CD8-positive, alpha-beta T cell (primary cell): ENCODE measurements at regions of chr19 and their contacts with region 1.

Region 1: GRCh38 chr19:16382775-16383543 is 58.3 kb downstream of the KLF2 start:
- DNase-seq: peak; percentile 70 to 91 (median 84)
- ATAC-seq: peak; percentile 80
- H3K4me3 ChIP-seq: peak overlapping the region; percentile 40 to 42
- H3K4me3 Mint-ChIP-seq: peak overlapping the region; percentile 54
- H3K27ac ChIP-seq: peak overlapping the region; percentile 66 to 82
- H3K27ac Mint-ChIP-seq: peak overlapping the region; percentile 95
- H3K4me1 ChIP-seq: peaks cover 58% of the 10 kb centered on the region
- H3K4me1 Mint-ChIP-seq: peaks cover 58% of the 10 kb centered on the region
- H3K27me3 ChIP-seq: no peaks in the 10 kb centered on the region
- H3K27me3 Mint-ChIP-seq: no peaks in the 10 kb centered on the region
- CTCF ChIP-seq: peak; percentile 85

Region 2: GRCh38 chr19:16216744-16217670 is 166.0 kb before region 1 on chr19:
- CTCF ChIA-PET with region 1: interaction called, 10 read pairs
- POLR2A ChIA-PET with region 1: interaction called, 3 read pairs
- intact Hi-C with region 1: no loop called
- DNase-seq: peak in 8 of 9 experiments; percentile 28 to 83 (median 59)
- ATAC-seq: peak; percentile 86
- H3K4me3 ChIP-seq: peak overlapping the region in 1 of 2 experiments; percentile 29
- H3K4me3 Mint-ChIP-seq: peak overlapping the region; percentile 80
- H3K27ac ChIP-seq: peak overlapping the region; percentile 44
- H3K27ac Mint-ChIP-seq: peak overlapping the region; percentile 95
- H3K4me1 ChIP-seq: peaks cover 66% of the 10 kb centered on the region
- H3K4me1 Mint-ChIP-seq: peaks cover 65% of the 10 kb centered on the region
- H3K27me3 ChIP-seq: no peaks in the 10 kb centered on the region
- H3K27me3 Mint-ChIP-seq: no peaks in the 10 kb centered on the region
- CTCF ChIP-seq: no peak

Region 3: DNA sequence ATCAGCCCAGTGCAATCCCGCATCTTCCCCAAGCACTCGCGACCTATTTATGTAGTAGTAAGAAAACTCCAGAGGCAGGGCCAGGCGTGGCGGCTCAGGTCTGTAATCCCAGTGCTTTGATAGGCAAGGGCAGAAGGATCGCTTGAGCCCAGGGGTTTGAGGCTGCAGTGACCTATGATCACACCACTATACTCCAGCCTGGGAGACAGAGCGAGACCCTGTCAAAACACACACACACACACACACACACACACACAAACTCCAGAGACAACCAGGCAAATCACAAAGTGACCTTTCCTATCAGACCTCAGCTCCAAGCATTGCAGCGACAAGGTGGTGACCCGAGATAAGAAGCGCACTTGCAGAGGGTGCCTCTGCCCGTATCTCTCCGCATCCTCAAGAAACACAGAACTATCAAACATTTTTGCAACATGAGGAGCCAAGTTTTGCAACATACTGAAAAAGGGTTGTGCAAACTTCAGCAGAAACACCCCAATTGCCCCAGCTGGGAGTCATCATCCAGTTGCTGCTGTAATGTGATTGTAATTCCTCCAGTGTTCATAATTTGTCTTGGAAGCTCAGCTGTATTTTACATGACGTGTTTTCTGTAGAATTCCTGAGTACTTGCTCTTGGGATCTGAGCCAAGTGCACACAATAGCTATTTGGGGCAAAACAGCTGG is 67.0 kb before region 1 on chr19:
- CTCF ChIA-PET with region 1: interaction called, 13 read pairs
- POLR2A ChIA-PET with region 1: no interaction called
- intact Hi-C with region 1: no loop called
- DNase-seq: no peak
- ATAC-seq: no peak
- H3K4me3 ChIP-seq: no peak overlapping the region
- H3K4me3 Mint-ChIP-seq: no peak overlapping the region
- H3K27ac ChIP-seq: no peak overlapping the region
- H3K27ac Mint-ChIP-seq: no peak overlapping the region
- H3K4me1 ChIP-seq: peaks cover 11% of the 10 kb centered on the region
- H3K4me1 Mint-ChIP-seq: peaks cover 14% of the 10 kb centered on the region
- H3K27me3 ChIP-seq: no peaks in the 10 kb centered on the region
- H3K27me3 Mint-ChIP-seq: no peaks in the 10 kb centered on the region
- CTCF ChIP-seq: no peak

Region 4: GRCh38 chr19:16338470-16339360 is 44.2 kb before region 1 on chr19:
- CTCF ChIA-PET with region 1: interaction called, 200 read pairs
- POLR2A ChIA-PET with region 1: interaction called, 2,627 read pairs
- intact Hi-C with region 1: no loop called
- DNase-seq: peak in 6 of 9 experiments; percentile 55 to 83 (median 62)
- ATAC-seq: peak; percentile 49
- H3K4me3 ChIP-seq: peak overlapping the region; percentile 25 to 38
- H3K4me3 Mint-ChIP-seq: peak overlapping the region; percentile 81
- H3K27ac ChIP-seq: peak overlapping the region; percentile 28 to 76
- H3K27ac Mint-ChIP-seq: peak overlapping the region; percentile 94
- H3K4me1 ChIP-seq: peaks cover 71% of the 10 kb centered on the region
- H3K4me1 Mint-ChIP-seq: peaks cover 61% of the 10 kb centered on the region
- H3K27me3 ChIP-seq: no peaks in the 10 kb centered on the region
- H3K27me3 Mint-ChIP-seq: no peaks in the 10 kb centered on the region
- CTCF ChIP-seq: no peak

Region 5: GRCh38 chr19:16371540-16371986 is 11.4 kb before region 1 on chr19:
- CTCF ChIA-PET with region 1: interaction called, 131 read pairs
- POLR2A ChIA-PET with region 1: interaction called, 206 read pairs
- intact Hi-C with region 1: loop called (anchors 1 kb)
- DNase-seq: peak; percentile 87 to 97 (median 92)
- ATAC-seq: peak; percentile 41
- H3K4me3 ChIP-seq: peak overlapping the region; percentile 33 to 44
- H3K4me3 Mint-ChIP-seq: no peak overlapping the region
- H3K27ac ChIP-seq: peak overlapping the region; percentile 91 to 95
- H3K27ac Mint-ChIP-seq: no peak overlapping the region
- H3K4me1 ChIP-seq: peaks cover 95% of the 10 kb centered on the region
- H3K4me1 Mint-ChIP-seq: peaks cover 68% of the 10 kb centered on the region
- H3K27me3 ChIP-seq: no peaks in the 10 kb centered on the region
- H3K27me3 Mint-ChIP-seq: no peaks in the 10 kb centered on the region
- CTCF ChIP-seq: no peak

Region 6: GRCh38 chr19:17739121-17739875 is 1356.3 kb after region 1 on chr19:
- CTCF ChIA-PET with region 1: no interaction called
- POLR2A ChIA-PET with region 1: no interaction called
- intact Hi-C with region 1: no loop called
- DNase-seq: no peak
- ATAC-seq: no peak
- H3K4me3 ChIP-seq: no peak overlapping the region
- H3K4me3 Mint-ChIP-seq: no peak overlapping the region
- H3K27ac ChIP-seq: no peak overlapping the region
- H3K27ac Mint-ChIP-seq: no peak overlapping the region
- H3K4me1 ChIP-seq: no peaks in the 10 kb centered on the region
- H3K4me1 Mint-ChIP-seq: no peaks in the 10 kb centered on the region
- H3K27me3 ChIP-seq: no peaks in the 10 kb centered on the region
- H3K27me3 Mint-ChIP-seq: no peaks in the 10 kb centered on the region
- CTCF ChIP-seq: no peak